Naive thymus-derived CD4-positive, alpha-beta T cell (primary cell): ENCODE measurements at regions of chr13 and their contacts with region 1.

Region 1: DNA sequence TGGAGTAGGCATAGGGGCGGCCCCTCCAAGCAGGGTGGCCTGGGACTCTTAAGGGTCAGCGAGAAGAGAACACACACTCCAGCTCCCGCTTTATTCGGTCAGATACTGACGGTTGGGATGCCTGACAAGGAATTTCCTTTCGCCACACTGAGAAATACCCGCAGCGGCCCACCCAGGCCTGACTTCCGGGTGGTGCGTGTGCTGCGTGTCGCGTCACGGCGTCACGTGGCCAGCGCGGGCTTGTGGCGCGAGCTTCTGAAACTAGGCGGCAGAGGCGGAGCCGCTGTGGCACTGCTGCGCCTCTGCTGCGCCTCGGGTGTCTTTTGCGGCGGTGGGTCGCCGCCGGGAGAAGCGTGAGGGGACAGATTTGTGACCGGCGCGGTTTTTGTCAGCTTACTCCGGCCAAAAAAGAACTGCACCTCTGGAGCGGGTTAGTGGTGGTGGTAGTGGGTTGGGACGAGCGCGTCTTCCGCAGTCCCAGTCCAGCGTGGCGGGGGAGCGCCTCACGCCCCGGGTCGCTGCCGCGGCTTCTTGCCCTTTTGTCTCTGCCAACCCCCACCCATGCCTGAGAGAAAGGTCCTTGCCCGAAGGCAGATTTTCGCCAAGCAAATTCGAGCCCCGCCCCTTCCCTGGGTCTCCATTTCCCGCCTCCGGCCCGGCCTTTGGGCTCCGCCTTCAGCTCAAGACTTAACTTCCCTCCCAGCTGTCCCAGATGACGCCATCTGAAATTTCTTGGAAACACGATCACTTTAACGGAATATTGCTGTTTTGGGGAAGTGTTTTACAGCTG is at the starts of genes BRCA2 and ZAR1L:
- DNase-seq: peak; percentile 79 to 90 (median 86)
- ATAC-seq: peak; percentile 94
- H3K4me3 ChIP-seq: peak within 1 kb of the TSS; percentile 94
- H3K4me3 Mint-ChIP-seq: peak within 1 kb of the TSS; percentile 92 to 98 (median 96)
- H3K27ac ChIP-seq: peak within 1 kb of the TSS; percentile 99
- H3K27ac Mint-ChIP-seq: peak within 1 kb of the TSS; percentile 98 to 100 (median 100)
- H3K4me1 ChIP-seq: peaks cover 7 to 8% of the 10 kb centered on the region in 2 donors
- H3K4me1 Mint-ChIP-seq: peaks cover 5 to 43% (median 9%) of the 10 kb centered on the region in 7 donors
- H3K27me3 ChIP-seq: no peaks in the 10 kb centered on the region
- H3K27me3 Mint-ChIP-seq: no peaks in the 10 kb centered on the region
- total RNA-seq, gene BRCA2: 3.2 to 19.9 (median 4.3) TPM
- total RNA-seq, gene ZAR1L: not detected

Region 2: DNA sequence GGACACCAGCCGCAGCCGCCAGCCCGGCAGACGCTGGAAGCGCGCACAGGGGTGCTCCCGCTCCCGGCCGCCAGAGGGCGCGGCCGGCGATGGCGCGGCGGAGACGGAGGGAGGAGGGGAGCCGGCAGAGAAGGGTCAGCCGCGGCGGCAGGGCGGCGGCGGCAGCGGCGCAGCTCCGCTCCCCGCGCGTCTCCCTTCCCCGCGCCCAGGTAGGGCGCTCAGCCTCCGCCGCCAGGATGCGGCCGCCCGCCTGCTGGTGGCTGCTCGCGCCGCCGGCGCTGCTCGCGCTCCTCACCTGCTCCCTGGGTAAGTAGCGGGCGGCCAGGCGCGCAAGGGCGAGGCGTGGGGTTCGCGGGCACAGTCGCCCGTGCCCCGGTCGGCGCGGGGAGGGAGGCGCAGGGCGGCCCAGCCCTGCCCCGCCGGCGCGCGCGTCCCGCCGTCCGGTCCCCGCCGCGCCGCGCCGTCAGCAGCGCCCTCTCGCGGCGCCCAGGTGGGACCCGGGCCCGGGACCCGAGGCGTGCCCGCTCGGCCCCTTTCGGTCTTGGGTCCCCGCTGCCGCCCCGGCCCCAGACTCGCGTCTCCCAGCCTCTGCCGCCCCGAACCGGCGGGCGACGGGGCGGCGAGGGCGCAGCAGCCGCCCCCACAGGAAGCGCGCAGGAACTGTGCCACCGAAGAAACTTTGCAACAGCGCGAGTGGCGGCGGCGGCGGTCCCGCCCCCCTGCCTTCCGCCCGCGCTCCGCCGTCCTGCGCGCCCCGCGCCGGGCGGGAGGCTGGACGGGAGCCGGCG is 1115.4 kb before region 1 on chr13 and contains the start of gene B3GLCT:
- CTCF ChIA-PET with region 1: no interaction called
- POLR2A ChIA-PET with region 1: no interaction called
- intact Hi-C with region 1: loop called in 1 of 2 experiments (anchors 5 kb)
- DNase-seq: peak; percentile 70 to 90 (median 86)
- ATAC-seq: peak; percentile 88
- H3K4me3 ChIP-seq: peak within 1 kb of the TSS; percentile 65
- H3K4me3 Mint-ChIP-seq: peak within 1 kb of the TSS; percentile 83 to 92 (median 89)
- H3K27ac ChIP-seq: peak within 1 kb of the TSS; percentile 82
- H3K27ac Mint-ChIP-seq: peak within 1 kb of the TSS; percentile 78 to 94 (median 92)
- H3K4me1 ChIP-seq: peaks cover 5 to 6% of the 10 kb centered on the region in 2 donors
- H3K4me1 Mint-ChIP-seq: peaks cover 13 to 28% (median 23%) of the 10 kb centered on the region in 7 donors
- H3K27me3 ChIP-seq: no peaks in the 10 kb centered on the region
- H3K27me3 Mint-ChIP-seq: peaks cover 0 to 19% (median 0%) of the 10 kb centered on the region in 5 donors
- total RNA-seq, gene B3GLCT: 3.7 to 4.6 (median 4.4) TPM

Region 3: DNA sequence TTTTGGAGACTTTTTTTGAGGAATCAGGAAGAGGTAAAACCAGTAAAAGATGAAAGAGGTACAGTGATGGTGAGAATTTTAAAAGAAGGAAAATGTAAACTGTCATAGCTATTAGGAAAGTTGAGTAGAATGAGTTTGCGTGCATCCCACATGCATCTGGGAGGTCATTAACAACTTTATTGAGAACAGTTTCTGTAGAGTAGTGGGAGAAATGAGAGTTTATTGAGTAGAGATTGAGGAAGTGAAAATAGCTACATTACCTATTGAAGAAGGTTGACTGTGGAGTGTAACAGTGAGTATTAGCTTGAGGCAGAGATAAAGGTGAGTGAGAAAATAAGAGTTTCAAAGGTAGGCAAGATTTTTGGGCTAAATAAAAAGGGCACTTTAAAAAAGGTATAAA is 38.6 kb after region 1 on chr13:
- CTCF ChIA-PET with region 1: no interaction called
- POLR2A ChIA-PET with region 1: no interaction called
- intact Hi-C with region 1: loop called in 1 of 2 experiments (anchors 5 kb)
- DNase-seq: no peak
- ATAC-seq: no peak
- H3K4me3 ChIP-seq: no peak overlapping the region
- H3K4me3 Mint-ChIP-seq: no peak overlapping the region
- H3K27ac ChIP-seq: no peak overlapping the region
- H3K27ac Mint-ChIP-seq: no peak overlapping the region
- H3K4me1 ChIP-seq: no peaks in the 10 kb centered on the region
- H3K4me1 Mint-ChIP-seq: peaks cover 0 to 9% (median 0%) of the 10 kb centered on the region in 7 donors
- H3K27me3 ChIP-seq: no peaks in the 10 kb centered on the region
- H3K27me3 Mint-ChIP-seq: no peaks in the 10 kb centered on the region

Region 4: GRCh38 chr13:32443111-32443510 is 127.7 kb after region 1 on chr13:
- CTCF ChIA-PET with region 1: no interaction called
- POLR2A ChIA-PET with region 1: no interaction called
- intact Hi-C with region 1: loop called in 1 of 2 experiments (anchors 5 kb)
- DNase-seq: peak in 7 of 9 donors; percentile 12 to 59 (median 37)
- ATAC-seq: peak; percentile 79
- H3K4me3 ChIP-seq: no peak overlapping the region
- H3K4me3 Mint-ChIP-seq: no peak overlapping the region
- H3K27ac ChIP-seq: no peak overlapping the region
- H3K27ac Mint-ChIP-seq: peak overlapping the region in 3 of 9 donors; percentile 2 to 25 (median 6)
- H3K4me1 ChIP-seq: no peaks in the 10 kb centered on the region
- H3K4me1 Mint-ChIP-seq: peaks cover 0 to 10% (median 3%) of the 10 kb centered on the region in 7 donors
- H3K27me3 ChIP-seq: no peaks in the 10 kb centered on the region
- H3K27me3 Mint-ChIP-seq: no peaks in the 10 kb centered on the region

Region 5: GRCh38 chr13:32650705-32651311 is 335.4 kb after region 1 on chr13:
- CTCF ChIA-PET with region 1: no interaction called
- POLR2A ChIA-PET with region 1: no interaction called
- intact Hi-C with region 1: loop called in 1 of 2 experiments (anchors 5 kb)
- DNase-seq: peak in 8 of 9 donors; percentile 16 to 55 (median 41)
- ATAC-seq: peak; percentile 91
- H3K4me3 ChIP-seq: no peak overlapping the region
- H3K4me3 Mint-ChIP-seq: no peak overlapping the region
- H3K27ac ChIP-seq: no peak overlapping the region
- H3K27ac Mint-ChIP-seq: peak overlapping the region in 1 of 9 donors; percentile 21
- H3K4me1 ChIP-seq: peaks cover 0 to 10% of the 10 kb centered on the region in 2 donors
- H3K4me1 Mint-ChIP-seq: peaks cover 23 to 55% (median 40%) of the 10 kb centered on the region in 7 donors
- H3K27me3 ChIP-seq: no peaks in the 10 kb centered on the region
- H3K27me3 Mint-ChIP-seq: no peaks in the 10 kb centered on the region

Region 6: GRCh38 chr13:33817901-33818706 is 1502.7 kb after region 1 on chr13 and contains the start of gene RFC3:
- CTCF ChIA-PET with region 1: no interaction called
- POLR2A ChIA-PET with region 1: no interaction called
- intact Hi-C with region 1: loop called (anchors 1 to 5 kb)
- DNase-seq: peak; percentile 78 to 89 (median 87)
- ATAC-seq: peak; percentile 95
- H3K4me3 ChIP-seq: peak within 1 kb of the TSS; percentile 84
- H3K4me3 Mint-ChIP-seq: peak within 1 kb of the TSS; percentile 86 to 100 (median 96)
- H3K27ac ChIP-seq: peak within 1 kb of the TSS; percentile 70
- H3K27ac Mint-ChIP-seq: peak within 1 kb of the TSS; percentile 89 to 98 (median 95)
- H3K4me1 ChIP-seq: peaks cover 0 to 8% of the 10 kb centered on the region in 2 donors
- H3K4me1 Mint-ChIP-seq: peaks cover 14 to 44% (median 25%) of the 10 kb centered on the region in 7 donors
- H3K27me3 ChIP-seq: no peaks in the 10 kb centered on the region
- H3K27me3 Mint-ChIP-seq: peaks cover 0 to 7% (median 0%) of the 10 kb centered on the region in 5 donors
- total RNA-seq, gene RFC3: 4.5 to 29.9 (median 7.1) TPM